ENCODE measurements at regions of chr3 and their contacts with region 1.

Region 1: GRCh38 chr3:15557511-15557946 is 36.0 kb upstream of the COLQ start:
- DNase-seq: peak; percentile 77
- H3K4me3 Mint-ChIP-seq: no peak overlapping the region
- H3K27ac Mint-ChIP-seq: no peak overlapping the region
- H3K4me1 Mint-ChIP-seq: peaks cover 16% of the 10 kb centered on the region
- H3K27me3 Mint-ChIP-seq: no peaks in the 10 kb centered on the region

Region 2: DNA sequence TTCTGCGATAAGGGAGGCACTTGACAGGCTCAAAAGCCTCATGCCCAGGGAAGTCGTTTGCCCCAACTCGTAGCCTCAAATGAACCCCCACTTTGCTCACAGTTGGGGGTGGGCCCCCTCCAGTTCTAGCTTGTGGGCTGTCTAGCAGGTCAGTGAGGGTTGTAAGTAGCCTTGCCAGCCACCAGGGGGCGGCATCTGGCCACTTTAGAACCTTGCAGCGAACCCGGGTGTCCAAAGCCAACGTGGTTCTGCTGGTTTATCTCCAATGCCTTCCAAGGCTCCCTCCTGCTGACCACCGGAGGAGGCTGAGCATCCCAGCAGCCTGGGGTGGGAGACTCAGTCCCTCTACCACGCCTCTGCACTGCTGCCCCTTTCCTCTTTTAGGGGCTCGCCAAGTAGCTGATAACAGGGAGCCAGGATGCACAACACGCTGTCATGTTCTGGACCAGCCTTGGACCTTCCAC is 449.4 kb before region 1 on chr3:
- CTCF ChIA-PET with region 1: no interaction called
- intact Hi-C with region 1: loop called (anchors 5 kb)
- DNase-seq: peak; percentile 76
- H3K4me3 Mint-ChIP-seq: no peak overlapping the region
- H3K27ac Mint-ChIP-seq: no peak overlapping the region
- H3K4me1 Mint-ChIP-seq: no peaks in the 10 kb centered on the region
- H3K27me3 Mint-ChIP-seq: no peaks in the 10 kb centered on the region

Region 3: GRCh38 chr3:15405448-15406050 is 152.0 kb before region 1 on chr3:
- CTCF ChIA-PET with region 1: interaction called, 3 read pairs
- intact Hi-C with region 1: loop called (anchors 2 kb)
- DNase-seq: peak; percentile 10
- H3K4me3 Mint-ChIP-seq: no peak overlapping the region
- H3K27ac Mint-ChIP-seq: no peak overlapping the region
- H3K4me1 Mint-ChIP-seq: peaks cover 1% of the 10 kb centered on the region
- H3K27me3 Mint-ChIP-seq: no peaks in the 10 kb centered on the region

Region 4: GRCh38 chr3:15427182-15427880 is 130.2 kb before region 1 on chr3 and contains the starts of genes EAF1 and METTL6:
- CTCF ChIA-PET with region 1: interaction called, 10 read pairs
- intact Hi-C with region 1: loop called (anchors 1 kb)
- DNase-seq: peak; percentile 92
- H3K4me3 Mint-ChIP-seq: peak within 1 kb of the TSS; percentile 90
- H3K27ac Mint-ChIP-seq: peak within 1 kb of the TSS; percentile 91
- H3K4me1 Mint-ChIP-seq: peaks cover 41% of the 10 kb centered on the region
- H3K27me3 Mint-ChIP-seq: no peaks in the 10 kb centered on the region
- total RNA-seq, gene EAF1: 19.5 to 20.6 TPM
- total RNA-seq, gene METTL6: 12.5 to 14.0 TPM

Region 5: GRCh38 chr3:15500107-15500724 is 57.3 kb before region 1 on chr3:
- CTCF ChIA-PET with region 1: no interaction called
- intact Hi-C with region 1: loop called (anchors 2 kb)
- DNase-seq: no peak
- H3K4me3 Mint-ChIP-seq: no peak overlapping the region
- H3K27ac Mint-ChIP-seq: no peak overlapping the region
- H3K4me1 Mint-ChIP-seq: peaks cover 21% of the 10 kb centered on the region
- H3K27me3 Mint-ChIP-seq: no peaks in the 10 kb centered on the region

Region 6: DNA sequence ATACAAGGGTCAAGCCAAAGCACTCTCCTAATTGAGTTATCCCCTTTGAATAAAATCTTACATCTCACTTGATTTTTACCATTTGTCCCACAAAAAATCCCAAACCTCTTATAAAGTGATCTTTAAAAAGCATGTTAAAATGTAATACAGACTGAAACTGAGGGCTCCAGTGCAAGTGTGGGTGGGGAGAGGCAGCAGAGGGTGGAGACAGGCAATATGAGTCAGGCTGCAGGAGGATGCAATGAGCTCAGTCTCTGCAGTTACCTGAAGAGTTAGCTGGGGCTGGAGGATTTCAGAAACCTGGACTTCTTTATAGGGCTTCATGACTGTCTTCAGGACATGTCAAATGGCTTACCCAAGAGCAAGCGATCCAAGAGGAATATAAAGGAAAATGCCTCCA is 21.8 kb before region 1 on chr3:
- CTCF ChIA-PET with region 1: interaction called, 4 read pairs
- intact Hi-C with region 1: loop called (anchors 2 kb)
- DNase-seq: peak; percentile 71
- H3K4me3 Mint-ChIP-seq: no peak overlapping the region
- H3K27ac Mint-ChIP-seq: no peak overlapping the region
- H3K4me1 Mint-ChIP-seq: peaks cover 38% of the 10 kb centered on the region
- H3K27me3 Mint-ChIP-seq: no peaks in the 10 kb centered on the region

Region 7: DNA sequence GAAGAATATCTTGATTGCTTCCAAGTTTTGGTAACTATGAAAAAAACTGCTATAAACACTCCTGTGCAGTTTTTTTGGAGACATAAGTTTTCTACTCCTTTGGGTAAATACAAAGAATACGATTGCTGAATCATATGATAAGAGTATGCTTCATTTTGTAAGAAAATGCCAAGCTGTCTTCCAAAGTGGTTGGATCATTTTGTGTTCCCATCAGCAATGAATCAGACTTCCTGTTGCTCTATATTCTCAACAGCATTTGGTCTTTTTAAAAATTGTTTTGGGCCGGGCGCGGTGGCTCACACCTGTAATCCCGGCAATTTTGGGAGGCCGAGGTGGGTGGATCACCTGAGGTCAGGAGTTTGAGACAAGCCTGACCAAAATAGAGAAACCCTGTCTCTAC is 58.5 kb after region 1 on chr3:
- CTCF ChIA-PET with region 1: no interaction called
- intact Hi-C with region 1: no loop called
- DNase-seq: no peak
- H3K4me3 Mint-ChIP-seq: no peak overlapping the region
- H3K27ac Mint-ChIP-seq: no peak overlapping the region
- H3K4me1 Mint-ChIP-seq: peaks cover 2% of the 10 kb centered on the region
- H3K27me3 Mint-ChIP-seq: no peaks in the 10 kb centered on the region

Measured in activated naive CD4-positive, alpha-beta T cell treated with anti-CD3 and anti-CD28 coated beads for 36 hours (primary cell).